ENCODE measurements at regions of chr5 and their contacts with region 1.

Region 1: DNA sequence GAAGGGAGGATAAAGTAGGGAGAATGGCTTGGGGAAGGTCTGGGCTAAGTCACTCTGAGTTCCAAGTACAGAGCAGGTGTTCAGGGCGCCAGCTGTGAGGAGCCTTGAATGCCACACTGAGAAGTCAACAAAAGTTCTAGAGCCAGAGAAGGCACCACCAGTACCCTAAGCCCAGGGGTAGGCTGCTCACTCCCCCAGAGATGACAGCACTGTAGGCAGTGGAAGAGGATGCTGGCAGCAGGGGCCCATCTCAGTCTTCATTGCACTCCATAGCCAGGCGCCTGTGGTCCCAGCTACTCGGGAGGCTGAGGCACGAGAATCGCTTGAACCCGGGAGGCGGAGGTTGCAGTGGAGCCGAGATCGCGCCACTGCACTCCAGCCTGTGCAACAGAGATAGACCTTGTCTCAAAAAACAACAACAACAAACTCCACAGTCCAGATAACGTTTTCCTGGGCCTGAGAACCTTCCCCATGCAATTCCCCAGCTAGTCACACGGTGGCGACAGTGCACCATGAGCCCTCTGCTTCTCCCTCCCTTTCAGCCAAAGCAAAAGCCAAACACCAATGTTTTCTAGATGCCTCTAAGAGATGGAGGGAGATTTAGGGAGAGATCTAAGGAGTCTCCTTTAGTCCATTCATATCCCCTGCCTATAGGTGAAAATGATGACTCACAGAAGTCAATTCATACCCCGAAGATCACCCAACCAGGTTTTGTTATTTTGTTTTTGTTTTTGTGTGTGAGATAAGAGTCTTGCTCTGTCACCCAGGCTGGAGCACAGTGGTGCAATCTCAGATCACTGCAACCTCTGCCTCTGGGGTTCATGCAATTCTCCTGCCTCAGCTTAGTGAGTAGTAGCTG is 19.8 kb upstream of the NSD1 start:
- DNase-seq: peak; percentile 94
- H3K4me3 Mint-ChIP-seq: no peak overlapping the region
- H3K27ac Mint-ChIP-seq: no peak overlapping the region
- H3K4me1 Mint-ChIP-seq: peaks cover 19% of the 10 kb centered on the region
- H3K27me3 Mint-ChIP-seq: no peaks in the 10 kb centered on the region

Region 2: GRCh38 chr5:176658007-176658599 is 455.7 kb before region 1 on chr5:
- intact Hi-C with region 1: loop called (anchors 1 kb)
- DNase-seq: peak; percentile 90
- H3K4me3 Mint-ChIP-seq: peak overlapping the region; percentile 77
- H3K27ac Mint-ChIP-seq: no peak overlapping the region
- H3K4me1 Mint-ChIP-seq: peaks cover 38% of the 10 kb centered on the region
- H3K27me3 Mint-ChIP-seq: peaks cover 4% of the 10 kb centered on the region

Region 3: GRCh38 chr5:177133091-177133852 is 19.5 kb after region 1 on chr5 and contains the start of gene NSD1:
- intact Hi-C with region 1: loop called (anchors 1 kb)
- DNase-seq: peak; percentile 97
- H3K4me3 Mint-ChIP-seq: peak within 1 kb of the TSS; percentile 95
- H3K27ac Mint-ChIP-seq: peak within 1 kb of the TSS; percentile 92
- H3K4me1 Mint-ChIP-seq: peaks cover 46% of the 10 kb centered on the region
- H3K27me3 Mint-ChIP-seq: no peaks in the 10 kb centered on the region
- total RNA-seq, gene NSD1: 103 and 108 TPM in 2 replicates

Region 4: GRCh38 chr5:177303121-177303924 is 189.5 kb after region 1 on chr5 and contains the starts of genes PRELID1 and RAB24:
- intact Hi-C with region 1: loop called (anchors 2 kb)
- DNase-seq: peak; percentile 97
- H3K4me3 Mint-ChIP-seq: peak within 1 kb of the TSS; percentile 98
- H3K27ac Mint-ChIP-seq: peak within 1 kb of the TSS; percentile 88
- H3K4me1 Mint-ChIP-seq: peaks cover 61% of the 10 kb centered on the region
- H3K27me3 Mint-ChIP-seq: no peaks in the 10 kb centered on the region
- total RNA-seq, gene PRELID1: 248 and 257 TPM in 2 replicates
- total RNA-seq, gene RAB24: 18.3 and 22.2 TPM in 2 replicates

Region 5: GRCh38 chr5:177370488-177371119 is 256.8 kb after region 1 on chr5:
- intact Hi-C with region 1: loop called (anchors 10 kb)
- DNase-seq: peak; percentile 88
- H3K4me3 Mint-ChIP-seq: peak overlapping the region; percentile 76
- H3K27ac Mint-ChIP-seq: no peak overlapping the region
- H3K4me1 Mint-ChIP-seq: peaks cover 46% of the 10 kb centered on the region
- H3K27me3 Mint-ChIP-seq: no peaks in the 10 kb centered on the region

Measured in activated CD4-positive, alpha-beta T cell treated with anti-CD3 and anti-CD28 coated beads, Interleukin-2, amount 10 ng/mL, durations not matched to agents 24 days and 14 days (primary cell).